Naive thymus-derived CD4-positive, alpha-beta T cell (primary cell): ENCODE measurements at regions of chr3 and their contacts with region 1.

Region 1: DNA sequence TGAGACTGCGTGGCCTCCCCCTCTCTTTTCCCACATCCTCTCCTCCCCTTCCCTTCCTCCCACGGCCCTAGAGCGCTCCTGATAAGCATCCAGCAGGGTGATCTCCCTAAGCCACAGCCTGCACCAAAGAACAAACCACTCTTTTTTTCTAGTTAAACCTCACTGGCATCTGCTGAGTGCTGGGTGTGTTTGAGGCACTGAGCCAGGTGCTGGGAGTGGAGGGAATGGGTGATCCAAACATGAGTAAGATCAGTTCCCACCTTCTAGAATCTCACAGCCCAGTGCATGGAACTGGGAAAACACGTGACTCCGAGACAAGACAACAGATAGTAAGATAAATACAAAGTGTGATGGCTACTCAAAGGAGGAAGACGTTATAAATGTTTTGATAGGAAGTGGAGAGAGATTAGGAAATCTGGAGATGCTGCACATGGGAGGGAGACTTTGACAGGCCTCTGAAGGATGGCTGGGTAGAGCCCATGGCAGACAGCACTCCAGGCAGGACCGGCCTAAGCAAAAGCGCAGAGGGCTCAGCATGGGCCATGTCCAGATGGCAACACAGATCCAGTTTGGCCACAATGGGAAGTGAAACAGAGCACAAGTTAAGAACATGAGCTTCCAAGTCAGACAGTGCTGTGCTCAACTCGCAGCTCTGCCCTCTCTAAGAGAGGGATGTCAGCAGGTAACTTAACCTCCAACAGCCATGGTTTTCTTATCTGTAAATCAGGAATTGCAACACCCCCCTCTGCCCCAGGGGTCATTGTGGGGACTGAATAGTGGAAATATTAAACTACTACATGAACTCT is 55.6 kb downstream of the CCR3 start:
- DNase-seq: no peak
- ATAC-seq: peak; percentile 56
- H3K4me3 ChIP-seq: no peak overlapping the region
- H3K4me3 Mint-ChIP-seq: peak overlapping the region in 3 of 10 donors; percentile 42 to 73 (median 55)
- H3K27ac ChIP-seq: no peak overlapping the region
- H3K27ac Mint-ChIP-seq: peak overlapping the region in 4 of 9 donors; percentile 2 to 84 (median 64)
- H3K4me1 ChIP-seq: peaks cover 34 to 80% of the 10 kb centered on the region in 2 donors
- H3K4me1 Mint-ChIP-seq: peaks cover 45 to 93% (median 68%) of the 10 kb centered on the region in 7 donors
- H3K27me3 ChIP-seq: no peaks in the 10 kb centered on the region
- H3K27me3 Mint-ChIP-seq: peaks cover 0 to 2% (median 0%) of the 10 kb centered on the region in 5 donors

Region 2: DNA sequence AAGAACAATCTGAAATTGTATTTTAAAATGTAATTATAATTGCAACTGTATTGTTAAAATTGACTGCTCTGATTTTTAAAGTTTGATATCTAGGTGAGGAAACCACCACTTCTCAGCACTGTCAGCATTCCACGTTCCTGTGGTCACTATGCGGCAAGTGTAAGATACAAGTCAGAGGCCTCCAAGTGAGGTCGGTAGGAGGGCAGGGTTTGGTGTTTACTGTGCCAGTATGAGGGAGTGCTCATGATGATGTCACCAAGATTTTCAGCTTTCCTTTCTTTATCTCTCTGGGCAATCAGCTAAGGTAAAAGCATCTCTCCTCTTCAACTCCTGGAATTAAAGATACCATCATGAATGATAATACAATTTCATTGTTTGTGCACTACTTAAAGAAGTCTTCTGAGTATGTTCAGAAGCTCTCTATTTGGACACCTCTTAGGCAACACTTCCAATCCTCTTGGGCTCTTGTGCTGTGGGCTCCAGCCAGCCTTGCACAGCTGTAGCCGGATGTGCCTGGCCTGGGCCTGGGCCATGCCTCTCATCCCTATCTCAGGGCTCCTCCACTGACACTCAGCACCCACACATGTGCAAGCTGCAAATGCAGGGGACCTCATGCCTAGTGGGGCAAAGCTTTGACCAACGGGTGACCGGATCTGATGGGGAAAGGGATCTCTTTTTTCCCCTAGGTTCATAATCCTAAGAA is 12.7 kb before region 1 on chr3:
- CTCF ChIA-PET with region 1: no interaction called
- POLR2A ChIA-PET with region 1: no interaction called
- intact Hi-C with region 1: loop called in 1 of 2 experiments (anchors 1 kb)
- DNase-seq: no peak
- ATAC-seq: peak; percentile 88
- H3K4me3 ChIP-seq: peak overlapping the region; percentile 11
- H3K4me3 Mint-ChIP-seq: peak overlapping the region in 1 of 10 donors; percentile 65
- H3K27ac ChIP-seq: no peak overlapping the region
- H3K27ac Mint-ChIP-seq: peak overlapping the region in 3 of 9 donors; percentile 19 to 88 (median 55)
- H3K4me1 ChIP-seq: peaks cover 15 to 80% of the 10 kb centered on the region in 2 donors
- H3K4me1 Mint-ChIP-seq: peaks cover 26 to 80% (median 31%) of the 10 kb centered on the region in 7 donors
- H3K27me3 ChIP-seq: no peaks in the 10 kb centered on the region
- H3K27me3 Mint-ChIP-seq: no peaks in the 10 kb centered on the region

Region 3: DNA sequence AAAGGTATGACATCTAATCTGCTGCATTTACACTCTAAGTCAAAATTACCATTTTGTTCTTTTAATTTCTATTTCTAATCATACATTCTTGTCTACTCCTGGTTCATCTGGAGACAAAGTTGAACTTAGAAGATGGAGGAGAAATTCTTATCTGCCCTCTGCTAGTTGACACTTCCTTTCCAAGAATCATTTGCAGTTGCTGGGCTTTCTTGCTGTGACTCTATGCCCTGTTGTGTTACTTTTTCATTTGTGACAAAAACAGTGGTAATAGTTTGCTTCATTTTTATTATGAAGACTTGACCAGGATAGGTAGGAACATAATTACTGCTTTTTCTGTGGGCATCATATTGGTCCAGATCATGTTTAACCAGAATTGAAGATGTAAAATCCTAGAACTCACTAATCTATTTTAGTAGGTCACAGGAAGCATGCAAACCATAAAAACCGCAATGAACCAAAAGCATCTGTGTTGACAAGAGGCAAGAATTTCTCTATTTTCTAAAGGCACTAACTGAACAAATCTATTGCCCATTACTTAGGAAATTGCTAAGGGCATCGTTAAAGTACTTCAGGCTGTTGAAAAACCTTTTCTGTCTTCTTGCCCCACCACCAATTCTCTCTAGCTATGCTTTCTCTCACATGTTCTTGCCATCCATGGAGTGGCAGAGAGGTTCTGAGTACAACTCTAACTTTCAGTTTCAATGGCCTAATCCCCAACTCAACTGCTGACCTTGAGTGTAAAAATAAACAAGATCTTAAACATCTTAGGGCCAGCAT is 51.8 kb after region 1 on chr3:
- CTCF ChIA-PET with region 1: interaction called, 3 read pairs
- POLR2A ChIA-PET with region 1: no interaction called
- intact Hi-C with region 1: loop called in 1 of 2 experiments (anchors 5 kb)
- DNase-seq: peak in 6 of 9 donors; percentile 17 to 44 (median 25)
- ATAC-seq: peak; percentile 32
- H3K4me3 ChIP-seq: peak overlapping the region; percentile 7
- H3K4me3 Mint-ChIP-seq: peak overlapping the region in 9 of 10 donors; percentile 57 to 82 (median 74)
- H3K27ac ChIP-seq: no peak overlapping the region
- H3K27ac Mint-ChIP-seq: peak overlapping the region; percentile 4 to 92 (median 71)
- H3K4me1 ChIP-seq: peaks cover 42 to 52% of the 10 kb centered on the region in 2 donors
- H3K4me1 Mint-ChIP-seq: peaks cover 51 to 71% (median 71%) of the 10 kb centered on the region in 7 donors
- H3K27me3 ChIP-seq: no peaks in the 10 kb centered on the region
- H3K27me3 Mint-ChIP-seq: peaks cover 0 to 27% (median 0%) of the 10 kb centered on the region in 5 donors